ENCODE measurements at regions of chr7 and their contacts with region 1.

Region 1: DNA sequence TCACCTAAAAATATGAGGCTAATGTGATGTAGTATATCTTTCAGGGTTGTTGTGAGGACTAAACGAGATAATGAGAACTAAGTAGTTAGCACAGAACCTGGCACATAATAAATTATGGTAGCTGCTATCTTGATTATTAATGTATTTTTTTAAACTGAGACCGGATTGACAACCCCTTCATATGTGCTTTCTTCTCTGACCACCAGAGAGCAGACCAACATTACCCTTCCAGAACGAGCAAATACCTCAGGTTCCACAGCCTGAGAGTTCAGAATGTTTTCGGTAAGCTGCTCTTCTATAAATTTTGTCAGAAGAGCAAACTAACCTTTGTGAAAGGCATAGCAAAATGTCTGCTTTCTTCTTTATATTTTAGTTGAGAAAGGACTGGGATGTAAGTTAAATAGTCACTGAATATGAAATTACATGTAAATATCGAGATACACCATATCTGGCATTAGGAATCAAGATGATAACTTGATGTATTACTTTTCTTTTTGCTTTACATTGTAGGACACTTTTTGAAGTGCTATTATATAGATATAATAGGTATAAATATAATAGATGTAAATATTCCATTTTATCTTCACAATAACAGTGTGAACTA is 13.6 kb upstream of the BPGM start:
- DNase-seq: peak; percentile 79
- H3K4me3 ChIP-seq: no peak overlapping the region
- H3K27ac ChIP-seq: peak overlapping the region; percentile 20
- H3K4me1 ChIP-seq: peaks cover 29% of the 10 kb centered on the region
- H3K27me3 ChIP-seq: no peaks in the 10 kb centered on the region
- CTCF ChIP-seq: peak; percentile 58 to 70
- POLR2A ChIP-seq: no peak

Region 2: GRCh38 chr7:134619627-134620331 is 13.3 kb before region 1 on chr7:
- CTCF ChIA-PET with region 1: interaction called, 53 read pairs
- POLR2A ChIA-PET with region 1: no interaction called
- dilution Hi-C with region 1: no loop called
- intact Hi-C with region 1: loop called (anchors 1 kb)
- DNase-seq: peak; percentile 83
- H3K4me3 ChIP-seq: no peak overlapping the region
- H3K27ac ChIP-seq: peak overlapping the region; percentile 23
- H3K4me1 ChIP-seq: peaks cover 26% of the 10 kb centered on the region
- H3K27me3 ChIP-seq: no peaks in the 10 kb centered on the region
- CTCF ChIP-seq: no peak
- POLR2A ChIP-seq: no peak

Region 3: DNA sequence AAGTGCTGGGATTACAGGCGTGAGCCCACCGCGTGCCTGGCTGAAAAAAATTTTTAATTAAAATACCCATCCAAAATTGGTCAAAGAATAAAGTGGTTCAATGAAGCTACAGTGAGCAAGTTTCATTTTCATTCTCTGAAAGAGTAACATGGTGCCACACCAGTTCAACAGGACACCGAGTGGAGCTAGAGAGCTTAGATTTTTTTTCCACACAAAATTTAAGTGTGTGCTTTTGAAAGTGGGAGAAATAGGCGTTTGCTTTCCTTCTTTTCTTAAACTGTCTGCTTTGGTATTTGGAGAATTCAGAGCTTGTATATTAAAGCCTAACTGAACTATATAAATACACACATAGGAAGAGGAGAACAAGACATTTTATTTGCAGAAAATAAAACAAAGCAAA is 57.0 kb after region 1 on chr7:
- CTCF ChIA-PET with region 1: interaction called, 75 read pairs
- POLR2A ChIA-PET with region 1: no interaction called
- dilution Hi-C with region 1: no loop called
- intact Hi-C with region 1: no loop called
- DNase-seq: peak; percentile 56
- H3K4me3 ChIP-seq: no peak overlapping the region
- H3K27ac ChIP-seq: no peak overlapping the region
- H3K4me1 ChIP-seq: no peaks in the 10 kb centered on the region
- H3K27me3 ChIP-seq: peaks cover 0 to 3% of the 10 kb centered on the region in 2 experiments
- CTCF ChIP-seq: peak in 1 of 2 donors; percentile 39
- POLR2A ChIP-seq: no peak

Region 4: DNA sequence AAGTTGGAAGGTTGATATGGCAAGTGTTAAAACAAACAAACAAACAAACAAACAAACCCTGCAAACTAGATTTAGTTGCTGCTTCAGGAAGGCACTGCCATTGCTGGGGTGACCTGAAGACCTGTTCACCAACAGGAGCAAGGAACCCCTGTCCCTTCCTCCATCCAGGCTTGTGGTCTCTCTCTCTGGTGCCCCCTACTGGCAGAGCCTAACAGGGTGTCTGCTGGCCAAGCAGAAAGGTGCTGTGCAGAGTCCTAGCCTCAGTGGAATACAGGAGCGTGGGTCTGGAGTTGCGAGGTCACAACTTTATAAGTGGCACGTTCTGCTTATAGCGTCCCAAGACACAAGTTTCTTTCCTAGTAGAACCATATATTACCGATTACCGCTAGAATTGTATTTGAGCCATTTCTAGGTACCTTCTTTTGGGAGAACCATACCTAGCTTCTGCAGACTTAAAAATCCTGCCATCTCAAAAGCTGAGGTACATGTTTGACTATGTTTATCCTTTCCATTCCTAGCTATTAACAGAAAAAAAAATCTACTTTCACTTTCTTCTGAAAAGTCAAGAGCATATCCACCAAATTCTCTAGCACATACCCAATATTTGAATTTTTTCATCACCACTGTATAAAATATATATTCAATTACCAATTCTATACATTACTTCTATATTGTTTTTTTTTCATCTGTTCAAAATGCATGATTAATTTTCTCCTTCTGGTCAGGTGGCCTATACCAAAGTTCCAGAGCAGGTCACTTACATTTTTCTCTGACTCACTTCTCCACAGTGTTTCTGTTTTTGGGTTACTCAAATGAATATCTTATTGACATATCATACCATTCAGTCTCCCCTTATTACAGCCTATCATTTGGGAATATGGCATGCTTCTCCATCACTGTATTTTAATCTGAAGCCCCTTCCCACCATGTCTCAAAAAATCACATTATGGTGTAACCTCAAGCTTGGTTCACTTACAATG is 117.3 kb after region 1 on chr7:
- CTCF ChIA-PET with region 1: interaction called, 34 read pairs
- POLR2A ChIA-PET with region 1: no interaction called
- dilution Hi-C with region 1: no loop called
- intact Hi-C with region 1: loop called (anchors 1 kb)
- DNase-seq: peak; percentile 51
- H3K4me3 ChIP-seq: no peak overlapping the region
- H3K27ac ChIP-seq: no peak overlapping the region
- H3K4me1 ChIP-seq: no peaks in the 10 kb centered on the region
- H3K27me3 ChIP-seq: no peaks in the 10 kb centered on the region
- CTCF ChIP-seq: peak; percentile 68 to 76
- POLR2A ChIP-seq: no peak

Region 5: GRCh38 chr7:134943764-134944400 is 310.8 kb after region 1 on chr7:
- CTCF ChIA-PET with region 1: interaction called, 6 read pairs
- POLR2A ChIA-PET with region 1: no interaction called
- dilution Hi-C with region 1: no loop called
- intact Hi-C with region 1: loop called (anchors 1 kb)
- DNase-seq: peak; percentile 55
- H3K4me3 ChIP-seq: no peak overlapping the region
- H3K27ac ChIP-seq: no peak overlapping the region
- H3K4me1 ChIP-seq: peaks cover 11% of the 10 kb centered on the region
- H3K27me3 ChIP-seq: no peaks in the 10 kb centered on the region
- CTCF ChIP-seq: peak; percentile 13 to 21
- POLR2A ChIP-seq: no peak